Activated CD4-positive, alpha-beta T cell treated with anti-CD3 and anti-CD28 coated beads for 36 hours (primary cell): ENCODE measurements at regions of chr12 and their contacts with region 1.

Region 1: GRCh38 chr12:96578526-96579125 is 89.2 kb downstream of the CFAP54 start:
- DNase-seq: no peak
- ATAC-seq: peak; percentile 86
- H3K4me3 Mint-ChIP-seq: no peak overlapping the region
- H3K27ac Mint-ChIP-seq: no peak overlapping the region
- H3K4me1 Mint-ChIP-seq: no peaks in the 10 kb centered on the region
- H3K27me3 Mint-ChIP-seq: peaks cover 5% of the 10 kb centered on the region

Region 2: DNA sequence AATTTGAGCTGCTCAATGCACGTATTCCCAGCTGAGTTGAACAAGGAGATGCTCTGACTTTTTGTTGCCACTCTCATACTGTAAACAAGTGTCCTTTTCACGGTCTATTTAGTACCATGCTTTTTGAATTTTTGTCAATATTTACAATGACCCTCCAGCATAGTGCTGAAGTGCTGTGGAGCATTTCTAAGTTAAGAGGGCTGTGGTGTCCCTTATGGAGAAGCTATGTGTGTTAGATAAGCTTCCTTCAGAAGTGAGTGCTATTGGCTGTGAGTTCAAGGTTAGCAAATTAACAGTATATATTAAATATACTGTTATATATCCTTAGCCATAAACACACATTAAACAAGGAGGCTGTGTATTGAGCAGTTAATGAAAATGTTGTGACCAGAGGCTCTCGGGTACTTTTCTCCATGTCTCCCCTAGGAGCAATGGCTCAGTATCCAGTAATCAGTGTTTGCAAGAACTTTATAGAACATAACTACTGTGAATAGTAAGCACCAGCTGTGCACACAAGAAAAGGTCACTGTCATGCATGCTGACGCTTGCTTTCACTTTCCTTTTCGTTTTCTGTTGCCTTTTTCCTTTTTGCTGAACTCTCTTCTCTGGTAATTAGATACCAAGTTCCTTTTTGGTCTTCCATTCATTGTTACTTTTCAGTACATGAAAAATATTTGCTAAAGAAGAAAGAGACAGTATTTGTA is 141.2 kb after region 1 on chr12:
- CTCF ChIA-PET with region 1: interaction called, 3 read pairs
- POLR2A ChIA-PET with region 1: no interaction called
- intact Hi-C with region 1: loop called in 1 of 2 experiments (anchors 2 kb)
- DNase-seq: peak; percentile 45
- ATAC-seq: peak; percentile 86
- H3K4me3 Mint-ChIP-seq: peak overlapping the region; percentile 75
- H3K27ac Mint-ChIP-seq: peak overlapping the region; percentile 91
- H3K4me1 Mint-ChIP-seq: peaks cover 9% of the 10 kb centered on the region
- H3K27me3 Mint-ChIP-seq: no peaks in the 10 kb centered on the region

Region 3: GRCh38 chr12:96912261-96912660 is 333.6 kb after region 1 on chr12:
- CTCF ChIA-PET with region 1: no interaction called
- POLR2A ChIA-PET with region 1: no interaction called
- intact Hi-C with region 1: loop called in 1 of 2 experiments (anchors 5 kb)
- DNase-seq: no peak
- ATAC-seq: no peak
- H3K4me3 Mint-ChIP-seq: no peak overlapping the region
- H3K27ac Mint-ChIP-seq: no peak overlapping the region
- H3K4me1 Mint-ChIP-seq: peaks cover 50% of the 10 kb centered on the region
- H3K27me3 Mint-ChIP-seq: no peaks in the 10 kb centered on the region

Region 4: GRCh38 chr12:97308576-97309198 is 730.1 kb after region 1 on chr12:
- CTCF ChIA-PET with region 1: interaction called, 24 read pairs
- POLR2A ChIA-PET with region 1: no interaction called
- intact Hi-C with region 1: loop called (anchors 1 kb)
- DNase-seq: no peak
- ATAC-seq: no peak
- H3K4me3 Mint-ChIP-seq: no peak overlapping the region
- H3K27ac Mint-ChIP-seq: no peak overlapping the region
- H3K4me1 Mint-ChIP-seq: no peaks in the 10 kb centered on the region
- H3K27me3 Mint-ChIP-seq: peaks cover 5% of the 10 kb centered on the region

Region 5: GRCh38 chr12:97404543-97404942 is 825.9 kb after region 1 on chr12:
- CTCF ChIA-PET with region 1: no interaction called
- POLR2A ChIA-PET with region 1: no interaction called
- intact Hi-C with region 1: loop called in 1 of 2 experiments (anchors 5 kb)
- DNase-seq: peak; percentile 25
- ATAC-seq: no peak
- H3K4me3 Mint-ChIP-seq: no peak overlapping the region
- H3K27ac Mint-ChIP-seq: no peak overlapping the region
- H3K4me1 Mint-ChIP-seq: no peaks in the 10 kb centered on the region
- H3K27me3 Mint-ChIP-seq: no peaks in the 10 kb centered on the region

Region 6: GRCh38 chr12:97960754-97961608 is 1382.4 kb after region 1 on chr12:
- CTCF ChIA-PET with region 1: interaction called, 3 read pairs
- POLR2A ChIA-PET with region 1: no interaction called
- intact Hi-C with region 1: loop called (anchors 2 to 10 kb)
- DNase-seq: peak; percentile 31
- ATAC-seq: peak; percentile 30
- H3K4me3 Mint-ChIP-seq: no peak overlapping the region
- H3K27ac Mint-ChIP-seq: no peak overlapping the region
- H3K4me1 Mint-ChIP-seq: no peaks in the 10 kb centered on the region
- H3K27me3 Mint-ChIP-seq: no peaks in the 10 kb centered on the region

Region 7: DNA sequence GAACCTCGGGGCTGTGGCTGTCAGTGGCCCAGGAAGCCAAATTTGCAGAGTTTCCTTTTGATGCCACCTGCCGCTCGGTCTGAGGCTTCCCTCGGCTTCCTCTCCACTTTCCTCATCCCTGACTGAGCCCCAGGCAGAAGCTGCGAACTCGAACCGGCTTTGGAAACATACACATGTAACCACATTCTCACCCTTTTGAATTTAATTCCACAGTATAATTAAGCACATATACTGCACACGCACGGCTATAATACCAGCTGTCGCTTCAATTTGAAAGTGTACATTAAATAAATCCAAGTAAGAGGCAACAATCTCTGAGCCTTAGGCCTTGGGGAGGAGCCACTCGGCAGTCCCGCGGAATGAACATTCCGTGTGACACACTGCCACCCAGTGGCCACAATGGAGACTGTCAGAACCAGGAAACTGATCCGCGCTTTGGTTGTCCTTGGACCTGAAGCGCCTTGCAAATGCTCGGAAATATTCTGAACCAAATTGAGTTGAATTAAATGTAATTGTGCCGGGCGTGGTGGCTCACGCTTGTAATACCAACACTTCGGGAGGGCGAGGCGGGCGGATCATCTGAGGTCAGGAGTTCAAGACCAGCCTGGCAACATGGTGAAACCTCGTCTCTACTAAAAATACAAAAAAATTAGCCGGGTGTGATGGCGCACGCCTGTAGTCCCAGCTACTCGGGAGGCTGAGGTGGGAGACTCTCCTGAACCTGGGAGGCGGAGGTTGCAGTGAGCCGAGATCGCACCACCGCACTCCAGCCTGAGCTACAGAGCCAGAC is 1818.9 kb after region 1 on chr12:
- CTCF ChIA-PET with region 1: no interaction called
- POLR2A ChIA-PET with region 1: no interaction called
- intact Hi-C with region 1: loop called in 1 of 2 experiments (anchors 1 kb)
- DNase-seq: peak; percentile 89
- ATAC-seq: peak; percentile 92
- H3K4me3 Mint-ChIP-seq: peak overlapping the region; percentile 65
- H3K27ac Mint-ChIP-seq: peak overlapping the region; percentile 55
- H3K4me1 Mint-ChIP-seq: peaks cover 30% of the 10 kb centered on the region
- H3K27me3 Mint-ChIP-seq: no peaks in the 10 kb centered on the region